ENCODE measurements at regions of chr7 and their contacts with region 1.

Region 1: DNA sequence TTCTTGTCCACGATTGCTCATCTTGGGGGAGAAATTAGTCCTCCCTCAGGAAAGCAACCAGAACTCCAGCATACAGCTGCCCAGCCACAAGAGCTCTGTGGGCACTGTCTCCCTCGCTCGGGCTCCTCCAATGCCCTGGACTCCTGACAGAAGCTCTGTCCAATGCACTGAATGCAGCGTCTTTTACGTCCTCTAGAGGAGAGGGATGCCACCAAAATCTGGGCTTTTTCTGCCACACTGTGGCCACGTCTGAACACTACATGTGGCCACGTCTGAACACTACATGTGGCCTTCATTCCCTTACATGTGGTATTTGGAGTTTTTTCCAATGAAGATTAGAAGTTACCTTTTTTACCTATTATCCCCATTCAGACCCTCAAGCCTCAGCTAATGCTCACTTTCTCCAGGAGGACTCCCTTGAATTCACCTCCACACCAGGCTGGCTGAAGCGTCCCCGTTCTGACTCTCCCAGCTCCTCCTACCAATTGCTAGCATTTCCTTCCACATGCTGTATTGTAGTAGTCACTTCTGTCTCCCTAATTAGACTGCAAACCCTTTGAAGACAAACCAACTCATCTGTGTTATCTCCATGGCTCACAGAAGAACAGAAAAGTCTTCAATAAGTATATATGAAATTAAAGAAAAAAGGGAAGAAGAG is 134.3 kb upstream of the PDE1C start:
- DNase-seq: peak in 1 of 4 experiments; percentile 34
- ATAC-seq: peak; percentile 84
- H3K4me3 ChIP-seq: no peak overlapping the region
- H3K27ac ChIP-seq: no peak overlapping the region
- H3K4me1 ChIP-seq: no peaks in the 10 kb centered on the region
- H3K27me3 ChIP-seq: no peaks in the 10 kb centered on the region
- CTCF ChIP-seq: peak; percentile 56 to 85 (median 62)
- EP300 ChIP-seq: no peak
- POLR2A ChIP-seq: no peak
- RAD21 ChIP-seq: peak; percentile 27 to 58; a peak in 3 of 4 replicates

Region 2: GRCh38 chr7:31443457-31443856 is 761.0 kb before region 1 on chr7:
- CTCF ChIA-PET with region 1: no interaction called
- POLR2A ChIA-PET with region 1: no interaction called
- in situ Hi-C with region 1: no loop called
- intact Hi-C with region 1: loop called (anchors 10 kb)
- DNase-seq: peak; percentile 53 to 63 (median 57)
- ATAC-seq: peak; percentile 89
- H3K4me3 ChIP-seq: no peak overlapping the region
- H3K27ac ChIP-seq: no peak overlapping the region
- H3K4me1 ChIP-seq: no peaks in the 10 kb centered on the region
- H3K27me3 ChIP-seq: no peaks in the 10 kb centered on the region
- CTCF ChIP-seq: peak; percentile 58 to 78 (median 76); a peak in 5 of 6 replicates
- EP300 ChIP-seq: no peak
- POLR2A ChIP-seq: no peak
- RAD21 ChIP-seq: peak; percentile 54 to 67

Measured in K562 (cell line).